K562 (cell line): ENCODE measurements at regions of chr7 and their contacts with region 1.

Region 1: DNA sequence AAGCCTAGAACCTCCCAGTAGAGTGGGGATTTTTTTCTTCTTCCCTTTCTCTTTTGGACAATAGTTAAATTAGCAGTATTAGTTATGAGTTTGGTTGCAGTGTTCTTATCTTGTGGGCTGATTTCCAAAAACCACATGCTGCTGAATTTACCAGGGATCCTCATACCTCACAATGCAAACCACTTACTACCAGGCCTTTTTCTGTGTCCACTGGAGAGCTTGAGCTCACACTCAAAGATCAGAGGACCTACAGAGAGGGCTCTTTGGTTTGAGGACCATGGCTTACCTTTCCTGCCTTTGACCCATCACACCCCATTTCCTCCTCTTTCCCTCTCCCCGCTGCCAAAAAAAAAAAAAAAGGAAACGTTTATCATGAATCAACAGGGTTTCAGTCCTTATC is 5.4 kb downstream of the OPN1SW start:
- DNase-seq: no peak
- ATAC-seq: no peak
- H3K4me3 ChIP-seq: no peak overlapping the region
- H3K27ac ChIP-seq: no peak overlapping the region
- H3K4me1 ChIP-seq: no peaks in the 10 kb centered on the region
- H3K27me3 ChIP-seq: no peaks in the 10 kb centered on the region
- CTCF ChIP-seq: no peak
- EP300 ChIP-seq: no peak
- POLR2A ChIP-seq: no peak
- RAD21 ChIP-seq: no peak

Region 2: DNA sequence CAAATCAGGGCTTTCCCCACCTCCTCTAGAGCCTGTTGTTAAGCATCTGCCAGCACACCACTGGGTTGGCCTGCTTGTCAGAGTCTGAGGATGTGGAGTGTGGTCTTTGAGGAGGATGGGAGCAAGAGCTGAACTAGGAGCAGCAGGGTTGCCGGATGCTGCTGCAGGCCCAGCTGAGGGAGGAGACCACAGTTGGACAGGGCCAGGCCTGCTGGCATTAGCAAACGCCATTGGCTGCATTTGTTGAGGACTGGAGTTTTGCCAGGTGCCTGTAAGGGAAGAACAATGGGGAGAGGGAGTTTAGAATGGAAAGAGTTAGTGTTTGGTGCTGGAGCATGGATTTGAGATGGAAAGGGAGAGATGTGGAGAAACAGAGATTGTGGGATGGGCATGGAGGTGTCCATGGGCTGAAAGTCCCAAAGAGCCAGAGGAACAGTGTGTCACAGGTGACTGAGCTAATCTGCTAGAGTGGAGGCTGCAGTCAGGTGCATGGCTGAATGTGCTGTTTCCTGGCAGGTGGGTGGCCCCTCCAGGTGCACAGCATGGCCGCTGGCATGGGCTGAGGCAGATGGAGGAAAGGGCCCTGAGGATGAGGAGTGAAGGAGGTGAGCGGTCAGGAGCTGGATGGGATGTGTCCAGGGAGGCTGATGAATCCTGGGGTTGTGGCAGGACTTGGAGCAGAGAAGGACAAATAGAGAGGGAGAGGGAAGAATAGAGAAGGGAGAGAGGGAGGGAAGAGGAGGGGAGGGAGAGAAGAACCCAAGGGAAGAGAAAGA is 488.4 kb before region 1 on chr7:
- CTCF ChIA-PET with region 1: no interaction called
- POLR2A ChIA-PET with region 1: no interaction called
- in situ Hi-C with region 1: no loop called
- intact Hi-C with region 1: no loop called
- DNase-seq: no peak
- ATAC-seq: no peak
- H3K4me3 ChIP-seq: no peak overlapping the region
- H3K27ac ChIP-seq: no peak overlapping the region
- H3K4me1 ChIP-seq: no peaks in the 10 kb centered on the region
- H3K27me3 ChIP-seq: peaks cover 15 to 32% of the 10 kb centered on the region in 2 experiments; a peak in 4 of 5 replicates
- CTCF ChIP-seq: no peak
- EP300 ChIP-seq: no peak
- POLR2A ChIP-seq: no peak
- RAD21 ChIP-seq: no peak

Region 3: DNA sequence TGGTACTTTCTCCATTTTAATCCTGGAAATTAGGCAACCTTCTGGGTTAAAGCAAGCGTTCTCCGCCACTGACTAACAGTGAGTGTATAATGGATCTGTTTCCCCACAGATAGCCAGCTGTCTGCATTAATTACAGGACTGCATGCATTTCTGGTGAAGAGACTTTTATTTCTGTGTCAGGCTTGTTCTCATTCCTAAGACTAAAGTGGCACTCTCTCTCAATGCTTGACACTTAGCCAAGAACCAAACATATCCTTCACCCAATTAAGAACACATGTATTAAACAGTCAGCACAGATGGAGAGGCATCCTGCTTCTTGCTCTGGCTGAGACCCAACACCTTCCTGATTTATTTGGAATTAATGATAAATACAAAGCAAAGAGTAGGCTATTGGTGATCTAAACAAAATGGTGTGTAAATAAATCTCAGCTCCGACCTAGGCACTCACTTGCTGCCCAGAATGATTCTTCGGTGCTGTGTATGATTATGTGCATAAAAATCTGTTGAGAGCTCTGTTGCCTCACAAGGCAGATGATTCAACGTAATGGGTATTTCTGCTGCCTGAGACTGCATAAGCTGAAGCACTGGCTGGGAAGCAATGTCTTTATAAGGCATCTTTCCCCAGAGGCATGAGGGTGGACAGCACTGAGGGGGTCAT is 14.3 kb before region 1 on chr7:
- CTCF ChIA-PET with region 1: no interaction called
- POLR2A ChIA-PET with region 1: interaction called, 45 read pairs
- in situ Hi-C with region 1: no loop called
- intact Hi-C with region 1: no loop called
- DNase-seq: no peak
- ATAC-seq: no peak; the same call in 2 of the 3 replicates
- H3K4me3 ChIP-seq: no peak overlapping the region
- H3K27ac ChIP-seq: no peak overlapping the region
- H3K4me1 ChIP-seq: no peaks in the 10 kb centered on the region
- H3K27me3 ChIP-seq: no peaks in the 10 kb centered on the region
- CTCF ChIP-seq: no peak
- EP300 ChIP-seq: no peak
- POLR2A ChIP-seq: no peak
- RAD21 ChIP-seq: no peak

Region 4: DNA sequence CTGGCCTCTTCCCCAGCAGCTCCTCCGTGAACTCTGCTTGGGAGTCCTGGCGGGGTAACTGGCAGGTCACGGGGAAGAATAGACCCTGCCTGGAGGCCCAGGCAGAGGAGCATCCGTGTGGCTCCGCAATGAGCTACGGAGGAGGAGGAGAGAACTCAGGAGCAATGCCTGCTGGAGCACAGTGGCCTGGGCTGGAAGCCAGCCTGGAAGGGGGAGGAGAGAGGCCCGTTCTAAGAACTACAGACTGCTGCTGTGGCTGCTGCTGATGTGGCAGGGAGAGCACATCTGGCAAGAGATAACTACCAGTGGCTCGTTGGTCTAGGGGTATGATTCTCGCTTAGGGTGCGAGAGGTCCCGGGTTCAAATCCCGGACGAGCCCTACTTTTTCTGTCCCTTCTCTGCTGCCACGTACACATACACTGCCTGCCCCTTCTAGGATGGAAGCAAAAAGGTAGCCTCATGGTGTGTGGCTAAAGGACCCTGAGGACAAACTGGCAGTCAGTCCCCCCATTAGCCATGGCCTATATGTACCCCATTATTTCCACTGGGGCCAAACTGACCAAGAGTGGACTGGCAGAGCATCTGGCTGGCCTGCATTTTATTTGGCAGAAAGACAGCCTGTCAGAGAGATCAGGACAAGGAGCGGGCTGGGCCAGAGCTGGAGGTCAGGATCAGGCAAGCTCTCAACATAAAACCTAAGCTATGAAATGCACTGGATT is 13.1 kb after region 1 on chr7:
- CTCF ChIA-PET with region 1: no interaction called
- POLR2A ChIA-PET with region 1: interaction called, 29 read pairs
- in situ Hi-C with region 1: no loop called
- intact Hi-C with region 1: no loop called
- DNase-seq: peak; percentile 92 to 95 (median 94)
- ATAC-seq: peak; percentile 93
- H3K4me3 ChIP-seq: peak overlapping the region; percentile 37
- H3K27ac ChIP-seq: peak overlapping the region; percentile 28
- H3K4me1 ChIP-seq: peaks cover 5 to 18% of the 10 kb centered on the region in 2 experiments; a peak in 4 of 5 replicates
- H3K27me3 ChIP-seq: no peaks in the 10 kb centered on the region; a peak in 1 of 5 replicates
- CTCF ChIP-seq: peak in 2 of 3 experiments; percentile 2 to 17; a peak in 1 of 6 replicates
- EP300 ChIP-seq: peak; percentile 86
- POLR2A ChIP-seq: no peak; the same call in 1 of the 2 replicates
- RAD21 ChIP-seq: peak; percentile 17 to 26; a peak in 2 of 4 replicates